Dendritic cell treated with granulocyte-macrophage colony-stimulating factor and Interleukin-4, amounts not matched to agents 40 ng/mL and 50 ng/mL, for 4 days (primary cell): ENCODE measurements at regions of chr16 and their contacts with region 1.

Region 1: GRCh38 chr16:57447186-57447962 is at the starts of genes CIAPIN1 and COQ9:
- H3K4me3 Mint-ChIP-seq: peak within 1 kb of the TSS; percentile 93
- H3K27ac Mint-ChIP-seq: peak within 1 kb of the TSS; percentile 96
- H3K4me1 Mint-ChIP-seq: peaks cover 25% of the 10 kb centered on the region
- H3K27me3 Mint-ChIP-seq: no peaks in the 10 kb centered on the region

Region 2: DNA sequence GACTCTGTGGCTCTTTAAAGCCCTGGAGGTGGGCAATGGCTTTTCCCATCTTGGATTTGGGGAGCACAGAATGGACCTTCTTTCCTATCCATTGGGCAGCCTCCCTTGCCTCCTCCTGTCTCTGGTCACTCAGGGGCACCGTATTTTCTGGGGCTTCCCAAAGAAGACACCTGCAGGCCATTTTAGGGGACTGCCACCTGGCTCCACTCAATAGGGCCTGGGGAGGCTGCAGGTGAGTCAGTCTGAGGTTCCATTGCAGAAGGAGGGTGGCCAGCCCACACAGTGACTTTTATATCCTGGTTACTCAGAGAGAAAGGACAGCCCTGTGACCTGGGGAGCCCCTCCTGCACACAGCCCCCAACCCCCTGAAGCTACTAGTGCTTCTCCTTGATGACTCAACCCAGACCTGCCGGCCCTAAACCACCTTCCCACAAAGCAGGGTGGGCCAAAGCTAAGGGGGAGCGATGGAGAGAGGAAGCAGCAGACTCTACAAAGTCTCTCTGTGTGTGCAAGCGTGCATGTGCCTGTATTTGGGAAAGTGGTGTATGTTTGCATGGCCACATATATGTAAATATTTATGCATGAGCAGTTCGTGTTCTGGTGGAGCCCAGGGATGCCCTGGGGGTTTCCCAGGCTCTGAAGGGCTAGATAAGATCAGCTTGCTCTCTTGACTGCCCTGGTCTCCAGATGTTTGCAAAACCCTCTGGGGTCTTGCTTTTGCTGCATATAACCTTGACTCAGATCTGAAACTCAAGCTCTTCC is 70.1 kb before region 1 on chr16:
- intact Hi-C with region 1: no loop called
- H3K4me3 Mint-ChIP-seq: no peak overlapping the region
- H3K27ac Mint-ChIP-seq: peak overlapping the region; percentile 24
- H3K4me1 Mint-ChIP-seq: peaks cover 30% of the 10 kb centered on the region
- H3K27me3 Mint-ChIP-seq: peaks cover 47% of the 10 kb centered on the region

Region 3: DNA sequence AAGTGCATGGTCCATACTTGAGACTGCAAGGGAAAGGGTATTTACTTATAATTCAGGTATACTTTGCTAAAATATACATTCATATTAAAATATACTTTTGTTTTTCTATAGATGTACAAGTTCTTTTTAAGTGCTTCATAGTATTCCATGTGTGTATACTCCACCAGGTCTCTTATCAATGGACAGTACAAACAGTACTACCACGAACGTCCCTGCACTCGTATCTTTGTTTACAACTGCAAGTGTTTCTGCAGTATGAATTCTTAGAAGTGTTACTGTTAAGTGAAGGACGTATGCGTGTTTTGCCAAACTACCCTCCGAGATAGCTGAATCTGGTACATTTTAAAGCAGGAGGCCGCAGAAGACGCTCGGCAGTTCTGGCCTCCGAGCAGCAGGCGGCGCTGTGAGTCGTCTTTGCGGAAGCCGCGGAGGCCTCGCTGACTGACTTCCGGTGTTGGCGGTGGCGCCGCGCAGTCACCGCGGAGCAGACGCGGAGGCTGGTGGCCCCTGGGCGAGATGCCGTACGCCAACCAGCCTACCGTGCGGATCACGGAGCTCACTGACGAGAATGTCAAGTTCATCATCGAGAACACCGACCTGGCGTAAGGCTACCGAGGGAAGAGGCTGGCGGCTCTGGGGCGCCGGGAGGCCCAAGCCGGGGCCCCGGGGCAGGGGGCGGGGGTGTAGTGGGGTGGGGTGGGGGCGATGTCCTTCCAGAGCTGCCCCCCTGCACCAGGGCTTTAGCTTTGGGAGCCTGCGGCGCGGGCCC is 15.0 kb after region 1 on chr16 and contains the start of gene POLR2C:
- intact Hi-C with region 1: loop called (anchors 1 kb)
- H3K4me3 Mint-ChIP-seq: peak within 1 kb of the TSS; percentile 100
- H3K27ac Mint-ChIP-seq: peak within 1 kb of the TSS; percentile 97
- H3K4me1 Mint-ChIP-seq: peaks cover 25% of the 10 kb centered on the region
- H3K27me3 Mint-ChIP-seq: no peaks in the 10 kb centered on the region